ENCODE measurements at regions of chrX and their contacts with region 1.

Region 1: GRCh38 chrX:50747471-50747900 is 66.5 kb downstream of the SHROOM4 start:
- DNase-seq: peak in 1 of 6 donors; percentile 11
- ATAC-seq: peak in 3 of 4 donors; percentile 45 to 64 (median 56)
- H3K4me3 ChIP-seq: no peak overlapping the region
- H3K27ac ChIP-seq: no peak overlapping the region
- H3K4me1 ChIP-seq: no peaks in the 10 kb centered on the region
- H3K27me3 ChIP-seq: peaks cover 0 to 21% (median 0%) of the 10 kb centered on the region in 4 donors
- CTCF ChIP-seq: peak; percentile 29 to 55 (median 48)

Region 2: GRCh38 chrX:50905334-50905733 is 157.8 kb after region 1 on chrX:
- intact Hi-C with region 1: loop called in 1 of 3 experiments (anchors 10 kb)
- DNase-seq: no peak
- ATAC-seq: no peak
- H3K4me3 ChIP-seq: no peak overlapping the region
- H3K27ac ChIP-seq: no peak overlapping the region
- H3K4me1 ChIP-seq: no peaks in the 10 kb centered on the region
- H3K27me3 ChIP-seq: peaks cover 0 to 15% (median 4%) of the 10 kb centered on the region in 4 donors
- CTCF ChIP-seq: peak in 1 of 4 donors; percentile 28

Measured in pancreas (tissue), 10 donors.